Psoas muscle (tissue), 8 donors: ENCODE measurements at regions of chr19 and their contacts with region 1.

Region 1: GRCh38 chr19:7852851-7853769 is 21.1 kb downstream of the PRR36 start:
- DNase-seq: peak; percentile 66 to 79
- ATAC-seq: peak; percentile 85 to 94 (median 88)
- H3K4me3 ChIP-seq: no peak overlapping the region
- H3K27ac ChIP-seq: no peak overlapping the region
- H3K4me1 ChIP-seq: peaks cover 9% of the 10 kb centered on the region
- H3K27me3 ChIP-seq: no peaks in the 10 kb centered on the region
- CTCF ChIP-seq: peak; percentile 82

Region 2: DNA sequence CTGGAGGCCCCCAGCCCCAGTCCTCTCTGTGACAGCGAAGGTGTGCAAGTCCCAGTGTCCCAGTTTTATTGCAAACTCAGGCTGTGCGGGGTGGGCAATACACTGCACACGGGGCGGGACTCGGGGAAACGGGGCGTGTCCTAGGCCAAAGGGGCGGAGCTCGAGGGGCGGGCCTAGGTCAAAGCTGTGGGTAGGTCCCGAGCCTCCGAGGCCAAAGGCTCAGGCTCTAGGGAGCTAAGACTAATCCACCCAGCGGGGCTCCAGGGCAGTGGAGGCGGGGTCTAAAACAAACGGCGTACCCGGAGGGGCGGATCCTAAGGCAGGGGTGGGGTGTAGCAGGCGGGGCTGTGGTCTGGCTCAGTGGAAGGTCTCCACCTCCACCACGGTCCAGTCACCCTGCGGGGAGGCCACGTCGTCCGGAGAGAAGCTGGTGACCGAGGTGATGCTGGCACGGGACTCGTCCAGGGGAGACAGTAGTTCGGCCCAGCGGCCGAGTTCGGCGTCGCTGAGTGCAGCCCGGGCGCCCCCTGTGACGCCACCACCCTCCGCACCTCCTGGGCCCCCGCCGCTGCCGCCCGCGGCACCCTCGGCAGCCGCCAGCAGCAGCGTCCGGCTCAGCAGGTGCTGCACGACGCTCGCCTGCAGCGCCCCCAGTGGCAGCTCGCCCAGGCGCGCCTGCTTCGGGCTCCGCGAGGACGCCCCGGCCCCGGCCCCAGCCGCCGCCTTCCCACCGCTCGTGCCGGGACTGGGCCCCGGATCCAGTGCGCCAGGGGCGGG is 15.8 kb after region 1 on chr19:
- intact Hi-C with region 1: no loop called
- DNase-seq: peak; percentile 63 to 80
- ATAC-seq: peak; percentile 76 to 82 (median 79)
- H3K4me3 ChIP-seq: peak overlapping the region; percentile 54
- H3K27ac ChIP-seq: no peak overlapping the region
- H3K4me1 ChIP-seq: peaks cover 8% of the 10 kb centered on the region
- H3K27me3 ChIP-seq: peaks cover 0 to 59% (median 16%) of the 10 kb centered on the region in 3 donors
- CTCF ChIP-seq: peak; percentile 69

Region 3: DNA sequence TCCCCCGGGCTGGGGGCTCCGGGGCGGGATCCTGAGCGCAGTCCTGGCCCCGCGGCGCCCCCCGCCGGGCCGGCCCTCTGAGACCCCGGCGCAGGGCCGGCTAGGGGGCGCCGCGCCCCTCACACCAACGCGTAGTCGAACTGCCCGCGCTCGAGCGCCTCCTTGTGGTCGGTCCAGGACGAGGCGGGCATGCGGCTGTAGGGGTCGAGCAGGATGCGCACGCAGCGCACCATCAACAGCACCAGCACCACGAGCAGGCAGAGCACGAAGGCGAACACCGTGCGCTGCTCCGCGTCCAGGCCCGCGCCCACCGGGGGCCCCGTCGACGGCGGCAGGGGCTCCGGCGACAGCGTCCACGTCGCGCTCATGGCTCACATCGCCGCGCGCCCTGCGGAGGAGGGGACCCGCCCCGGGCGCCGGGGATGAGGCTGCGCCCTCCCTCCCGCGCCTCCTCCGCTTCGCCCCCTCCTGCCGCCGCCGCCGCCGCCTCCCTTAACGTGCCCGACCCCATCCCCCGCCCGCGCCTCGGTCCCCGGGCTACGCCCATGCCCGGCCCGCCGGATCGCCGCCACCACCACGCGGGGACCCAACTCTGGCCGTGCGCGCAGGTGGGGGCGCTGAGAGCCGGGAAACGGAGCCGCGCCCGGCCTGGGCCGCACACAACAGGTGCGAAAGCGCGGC is 72.2 kb after region 1 on chr19:
- intact Hi-C with region 1: loop called in 1 of 2 experiments (anchors 2 kb)
- DNase-seq: peak; percentile 80 to 85
- ATAC-seq: no peak
- H3K4me3 ChIP-seq: peak overlapping the region; percentile 55
- H3K27ac ChIP-seq: no peak overlapping the region
- H3K4me1 ChIP-seq: peaks cover 29% of the 10 kb centered on the region
- H3K27me3 ChIP-seq: no peaks in the 10 kb centered on the region
- CTCF ChIP-seq: peak; percentile 70